ENCODE measurements at regions of chr1 and their contacts with region 1.

Region 1: GRCh38 chr1:15046487-15047165 is 106.9 kb upstream of the TMEM51 start:
- DNase-seq: peak in 8 of 9 experiments; percentile 27 to 65 (median 54)
- ATAC-seq: no peak
- H3K4me3 ChIP-seq: no peak overlapping the region
- H3K4me3 Mint-ChIP-seq: no peak overlapping the region
- H3K27ac ChIP-seq: no peak overlapping the region
- H3K27ac Mint-ChIP-seq: no peak overlapping the region
- H3K4me1 ChIP-seq: no peaks in the 10 kb centered on the region
- H3K4me1 Mint-ChIP-seq: no peaks in the 10 kb centered on the region
- H3K27me3 ChIP-seq: no peaks in the 10 kb centered on the region
- H3K27me3 Mint-ChIP-seq: no peaks in the 10 kb centered on the region
- CTCF ChIP-seq: peak; percentile 72

Region 2: GRCh38 chr1:13965770-13966398 is 1080.7 kb before region 1 on chr1:
- CTCF ChIA-PET with region 1: no interaction called
- POLR2A ChIA-PET with region 1: no interaction called
- intact Hi-C with region 1: loop called in 1 of 2 experiments (anchors 5 kb)
- DNase-seq: peak in 1 of 9 experiments; percentile 4
- ATAC-seq: no peak
- H3K4me3 ChIP-seq: no peak overlapping the region
- H3K4me3 Mint-ChIP-seq: no peak overlapping the region
- H3K27ac ChIP-seq: no peak overlapping the region
- H3K27ac Mint-ChIP-seq: no peak overlapping the region
- H3K4me1 ChIP-seq: no peaks in the 10 kb centered on the region
- H3K4me1 Mint-ChIP-seq: no peaks in the 10 kb centered on the region
- H3K27me3 ChIP-seq: no peaks in the 10 kb centered on the region
- H3K27me3 Mint-ChIP-seq: peaks cover 31% of the 10 kb centered on the region
- CTCF ChIP-seq: no peak

Region 3: GRCh38 chr1:14778898-14779865 is 267.4 kb before region 1 on chr1:
- CTCF ChIA-PET with region 1: interaction called, 5 read pairs
- POLR2A ChIA-PET with region 1: no interaction called
- intact Hi-C with region 1: loop called in 1 of 2 experiments (anchors 5 kb)
- DNase-seq: peak in 5 of 9 experiments; percentile 7 to 20 (median 16)
- ATAC-seq: no peak
- H3K4me3 ChIP-seq: no peak overlapping the region
- H3K4me3 Mint-ChIP-seq: no peak overlapping the region
- H3K27ac ChIP-seq: no peak overlapping the region
- H3K27ac Mint-ChIP-seq: no peak overlapping the region
- H3K4me1 ChIP-seq: no peaks in the 10 kb centered on the region
- H3K4me1 Mint-ChIP-seq: no peaks in the 10 kb centered on the region
- H3K27me3 ChIP-seq: no peaks in the 10 kb centered on the region
- H3K27me3 Mint-ChIP-seq: no peaks in the 10 kb centered on the region
- CTCF ChIP-seq: peak; percentile 19

Region 4: DNA sequence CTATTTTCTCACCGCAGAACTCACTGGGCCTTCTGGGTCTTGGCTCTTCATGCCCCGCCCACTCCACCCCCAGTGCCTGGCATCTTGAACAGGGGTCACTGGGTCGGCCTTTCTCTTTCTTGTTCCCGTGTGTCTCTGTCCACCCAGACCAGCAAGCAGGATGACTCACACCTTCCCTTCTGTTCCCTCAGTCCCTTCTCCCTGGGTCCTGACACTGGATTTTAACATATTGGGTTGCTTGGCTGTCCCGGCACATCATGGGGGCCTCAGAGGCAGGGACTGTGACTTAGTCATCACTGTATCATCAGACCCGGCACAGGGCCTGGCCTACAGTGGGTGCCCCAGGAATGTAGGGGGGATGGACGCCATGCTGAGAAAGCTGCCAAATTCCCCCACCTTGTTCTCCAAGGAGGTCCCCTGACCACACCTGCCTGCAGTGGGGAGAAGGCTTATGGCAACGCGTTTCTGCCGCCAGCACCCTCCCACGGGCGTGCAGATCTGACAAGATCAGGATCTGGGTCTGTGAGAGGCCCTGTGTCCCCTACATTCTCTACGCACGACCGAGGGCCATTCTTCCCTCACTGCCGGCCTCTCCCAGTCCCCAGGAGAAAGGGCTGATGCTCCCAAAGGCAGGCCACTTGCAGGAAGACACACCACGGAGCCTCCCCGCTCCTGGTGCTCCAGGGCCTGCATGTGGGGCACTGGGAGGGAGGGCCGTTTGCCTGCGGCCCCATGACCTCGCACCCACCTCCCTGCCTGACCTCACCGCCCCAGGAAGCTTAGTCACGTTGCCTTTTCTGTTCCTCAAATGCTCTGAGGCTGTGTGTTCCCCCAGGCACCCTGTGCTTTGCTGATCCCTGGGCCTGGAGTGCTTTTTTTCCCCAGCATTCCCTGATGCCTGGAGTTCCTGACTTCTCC is 50.2 kb before region 1 on chr1:
- CTCF ChIA-PET with region 1: no interaction called
- POLR2A ChIA-PET with region 1: no interaction called
- intact Hi-C with region 1: no loop called
- DNase-seq: no peak
- ATAC-seq: no peak
- H3K4me3 ChIP-seq: no peak overlapping the region
- H3K4me3 Mint-ChIP-seq: no peak overlapping the region
- H3K27ac ChIP-seq: no peak overlapping the region
- H3K27ac Mint-ChIP-seq: no peak overlapping the region
- H3K4me1 ChIP-seq: no peaks in the 10 kb centered on the region
- H3K4me1 Mint-ChIP-seq: no peaks in the 10 kb centered on the region
- H3K27me3 ChIP-seq: no peaks in the 10 kb centered on the region
- H3K27me3 Mint-ChIP-seq: peaks cover 2% of the 10 kb centered on the region
- CTCF ChIP-seq: no peak

Region 5: GRCh38 chr1:15008783-15009729 is 37.6 kb before region 1 on chr1:
- CTCF ChIA-PET with region 1: no interaction called
- POLR2A ChIA-PET with region 1: no interaction called
- intact Hi-C with region 1: no loop called
- DNase-seq: no peak
- ATAC-seq: no peak
- H3K4me3 ChIP-seq: no peak overlapping the region
- H3K4me3 Mint-ChIP-seq: no peak overlapping the region
- H3K27ac ChIP-seq: no peak overlapping the region
- H3K27ac Mint-ChIP-seq: no peak overlapping the region
- H3K4me1 ChIP-seq: no peaks in the 10 kb centered on the region
- H3K4me1 Mint-ChIP-seq: no peaks in the 10 kb centered on the region
- H3K27me3 ChIP-seq: no peaks in the 10 kb centered on the region
- H3K27me3 Mint-ChIP-seq: peaks cover 7% of the 10 kb centered on the region
- CTCF ChIP-seq: no peak

Region 6: GRCh38 chr1:15070145-15070748 is 23.6 kb after region 1 on chr1:
- CTCF ChIA-PET with region 1: no interaction called
- POLR2A ChIA-PET with region 1: no interaction called
- intact Hi-C with region 1: no loop called
- DNase-seq: no peak
- ATAC-seq: no peak
- H3K4me3 ChIP-seq: no peak overlapping the region
- H3K4me3 Mint-ChIP-seq: no peak overlapping the region
- H3K27ac ChIP-seq: no peak overlapping the region
- H3K27ac Mint-ChIP-seq: no peak overlapping the region
- H3K4me1 ChIP-seq: no peaks in the 10 kb centered on the region
- H3K4me1 Mint-ChIP-seq: peaks cover 3% of the 10 kb centered on the region
- H3K27me3 ChIP-seq: no peaks in the 10 kb centered on the region
- H3K27me3 Mint-ChIP-seq: no peaks in the 10 kb centered on the region
- CTCF ChIP-seq: no peak

Measured in CD8-positive, alpha-beta T cell (primary cell).